ENCODE measurements at regions of chrX and their contacts with region 1.

Region 1: GRCh38 chrX:19630228-19630627 is 114.9 kb upstream of the MAP3K15 start:
- H3K4me3 Mint-ChIP-seq: no peak overlapping the region
- H3K27ac Mint-ChIP-seq: peak overlapping the region; percentile 48
- H3K4me1 Mint-ChIP-seq: peaks cover 51% of the 10 kb centered on the region
- H3K27me3 Mint-ChIP-seq: no peaks in the 10 kb centered on the region

Region 2: GRCh38 chrX:19649226-19649995 is 19.2 kb after region 1 on chrX:
- intact Hi-C with region 1: no loop called
- H3K4me3 Mint-ChIP-seq: no peak overlapping the region
- H3K27ac Mint-ChIP-seq: peak overlapping the region; percentile 27
- H3K4me1 Mint-ChIP-seq: peaks cover 27% of the 10 kb centered on the region
- H3K27me3 Mint-ChIP-seq: no peaks in the 10 kb centered on the region

Region 3: GRCh38 chrX:19682712-19683331 is 52.6 kb after region 1 on chrX:
- intact Hi-C with region 1: loop called (anchors 10 kb)
- H3K4me3 Mint-ChIP-seq: no peak overlapping the region
- H3K27ac Mint-ChIP-seq: peak overlapping the region; percentile 72
- H3K4me1 Mint-ChIP-seq: peaks cover 53% of the 10 kb centered on the region
- H3K27me3 Mint-ChIP-seq: no peaks in the 10 kb centered on the region

Region 4: GRCh38 chrX:19824603-19825002 is 194.4 kb after region 1 on chrX:
- intact Hi-C with region 1: no loop called
- H3K4me3 Mint-ChIP-seq: no peak overlapping the region
- H3K27ac Mint-ChIP-seq: no peak overlapping the region
- H3K4me1 Mint-ChIP-seq: peaks cover 22% of the 10 kb centered on the region
- H3K27me3 Mint-ChIP-seq: no peaks in the 10 kb centered on the region

Measured in dendritic cell treated with granulocyte-macrophage colony-stimulating factor and Interleukin-4, amounts not matched to agents 40 ng/mL and 50 ng/mL, for 4 days (primary cell).